ENCODE measurements at regions of chr4 and their contacts with region 1.

Region 1: DNA sequence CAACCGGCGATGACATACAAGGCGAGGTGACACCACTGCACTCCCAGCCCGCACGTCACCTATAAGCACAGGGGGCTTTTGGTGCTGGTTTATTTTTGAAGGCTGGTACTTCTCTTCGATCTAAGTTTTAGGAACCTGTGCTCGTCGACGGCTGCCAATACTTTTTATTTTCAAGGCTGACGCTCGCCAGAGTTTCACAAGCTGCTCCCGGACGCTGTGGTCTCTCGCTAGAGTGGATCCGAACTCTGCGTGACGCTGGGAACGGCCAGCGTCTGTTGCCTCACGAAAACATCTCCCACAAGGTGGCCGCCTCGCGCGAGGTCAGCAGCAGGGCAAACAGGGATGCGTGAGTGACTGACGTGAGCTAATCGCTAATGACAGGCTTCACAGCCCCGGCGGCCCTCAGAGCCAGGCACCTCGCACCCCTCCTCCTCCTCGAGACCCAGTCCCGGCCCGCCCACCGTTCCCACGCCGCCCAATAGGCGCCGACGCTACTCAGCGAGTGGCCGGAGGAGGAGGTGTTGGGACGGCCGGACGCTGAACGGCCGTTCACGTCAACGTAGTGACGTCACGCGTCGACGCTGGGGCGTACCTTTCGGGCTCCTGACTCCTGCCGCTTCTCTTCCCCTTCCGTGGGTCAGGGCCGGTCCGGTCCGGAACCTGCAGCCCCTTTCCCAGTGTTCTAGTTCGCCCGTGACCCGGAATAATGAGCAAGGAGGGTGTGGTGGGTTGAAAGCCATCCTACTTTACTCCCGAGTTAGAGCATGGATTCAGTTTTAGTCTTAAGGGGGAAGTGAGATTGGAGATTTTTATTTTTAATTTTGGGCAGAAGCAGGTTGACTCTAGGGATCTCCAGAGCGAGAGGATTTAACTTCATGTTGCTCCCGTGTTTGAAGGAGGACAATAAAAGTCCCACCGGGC is at the start of gene CLCN3:
- DNase-seq: peak; percentile 99 to 100
- ATAC-seq: peak; percentile 100
- H3K4me3 ChIP-seq: peak within 1 kb of the TSS; percentile 73 to 89
- H3K27ac ChIP-seq: peak within 1 kb of the TSS; percentile 14 to 79
- H3K4me1 ChIP-seq: peaks cover 0 to 2% of the 10 kb centered on the region in 2 donors
- H3K27me3 ChIP-seq: no peaks in the 10 kb centered on the region
- total RNA-seq, gene CLCN3: 19.1 to 29.1 TPM

Region 2: DNA sequence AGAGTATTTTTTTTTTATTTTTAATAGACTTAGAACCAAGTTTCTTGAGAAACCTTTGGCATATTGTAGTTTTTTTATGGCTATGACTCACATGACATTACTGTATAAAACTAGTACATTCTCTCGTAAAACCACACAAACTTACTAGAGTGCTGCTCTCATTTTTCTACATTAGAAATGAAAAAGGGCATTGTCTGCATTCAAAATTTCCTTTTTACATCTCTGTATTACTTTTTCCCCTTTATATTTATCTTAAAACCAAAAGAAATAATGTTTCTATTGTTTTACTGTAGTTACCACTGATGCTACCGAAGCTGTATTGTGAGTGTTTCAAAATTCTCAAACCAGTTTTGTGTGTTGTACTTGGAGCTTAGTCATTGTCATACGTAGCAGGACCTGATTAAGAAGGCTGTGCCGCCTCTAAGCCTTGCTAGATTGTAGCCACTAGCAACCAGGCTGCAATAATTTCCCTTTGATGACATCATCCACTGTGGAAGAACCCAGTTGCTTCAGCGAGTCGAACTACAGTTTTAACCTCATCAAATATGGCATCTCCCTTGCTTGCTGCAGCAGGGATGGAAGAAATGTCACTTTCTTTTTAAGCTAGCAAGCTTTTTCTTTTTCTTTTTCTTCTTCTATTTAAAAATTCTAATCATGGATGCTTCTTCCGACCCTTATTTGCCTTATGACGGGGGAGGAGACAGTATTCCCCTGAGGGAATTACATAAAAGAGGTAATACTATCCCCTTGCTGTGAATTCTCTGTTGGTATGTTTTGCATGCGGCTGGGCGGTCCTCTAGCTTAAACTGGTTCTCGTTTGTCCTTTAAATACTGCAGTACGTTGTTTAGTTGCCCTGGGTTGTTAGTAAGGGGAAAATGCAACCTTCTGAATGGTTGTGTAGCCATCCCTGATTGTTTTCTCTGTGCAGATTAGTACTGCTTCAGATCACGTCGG is 39.8 kb after region 1 on chr4:
- intact Hi-C with region 1: loop called in 1 of 2 experiments (anchors 5 kb)
- DNase-seq: peak in 1 of 2 donors; percentile 63
- ATAC-seq: peak; percentile 98
- H3K4me3 ChIP-seq: peak overlapping the region; percentile 76 to 81
- H3K27ac ChIP-seq: peak overlapping the region; percentile 40 to 57
- H3K4me1 ChIP-seq: no peaks in the 10 kb centered on the region
- H3K27me3 ChIP-seq: no peaks in the 10 kb centered on the region

Region 3: GRCh38 chr4:169707958-169708643 is 87.9 kb after region 1 on chr4:
- intact Hi-C with region 1: loop called in 1 of 2 experiments (anchors 5 kb)
- DNase-seq: no peak
- ATAC-seq: peak; percentile 48
- H3K4me3 ChIP-seq: no peak overlapping the region
- H3K27ac ChIP-seq: peak overlapping the region in 1 of 2 donors; percentile 71
- H3K4me1 ChIP-seq: no peaks in the 10 kb centered on the region
- H3K27me3 ChIP-seq: no peaks in the 10 kb centered on the region

Region 4: DNA sequence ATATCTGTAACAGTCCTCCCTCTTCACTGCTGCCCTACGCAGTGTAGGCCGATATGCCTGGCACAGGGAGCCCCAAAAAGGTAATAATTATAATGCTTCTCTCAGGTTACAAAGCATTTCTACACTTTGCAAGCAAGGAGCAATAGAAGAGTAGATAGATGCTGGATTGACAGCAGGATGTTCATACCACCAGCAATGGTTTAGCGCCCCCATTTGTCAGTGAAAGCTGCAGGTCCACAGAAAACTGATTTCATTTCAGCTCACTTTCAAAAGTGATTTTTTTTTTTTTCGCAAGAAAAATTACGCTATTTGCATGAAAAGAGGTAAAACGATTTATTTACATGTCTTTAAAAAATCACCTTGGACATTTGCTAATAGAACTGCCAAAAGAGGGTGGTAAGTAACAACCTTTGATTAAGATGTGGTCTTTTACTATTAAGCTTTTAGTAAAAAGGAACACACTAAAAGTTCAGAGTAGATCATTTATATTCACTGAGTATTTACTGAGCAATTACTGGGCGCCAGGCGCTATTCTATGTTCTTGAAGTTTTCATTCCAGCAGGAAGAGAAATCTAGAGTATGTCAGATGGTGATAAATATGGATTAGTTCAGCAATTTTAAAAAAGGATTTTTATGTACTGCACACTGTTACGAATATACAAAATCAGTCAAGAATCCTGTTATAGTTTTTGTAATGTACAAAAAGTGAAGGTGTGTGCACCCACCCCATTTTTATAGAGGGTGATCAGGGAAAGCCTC is 103.2 kb after region 1 on chr4:
- intact Hi-C with region 1: no loop called
- DNase-seq: no peak
- ATAC-seq: no peak
- H3K4me3 ChIP-seq: no peak overlapping the region
- H3K27ac ChIP-seq: no peak overlapping the region
- H3K4me1 ChIP-seq: no peaks in the 10 kb centered on the region
- H3K27me3 ChIP-seq: no peaks in the 10 kb centered on the region

Region 5: DNA sequence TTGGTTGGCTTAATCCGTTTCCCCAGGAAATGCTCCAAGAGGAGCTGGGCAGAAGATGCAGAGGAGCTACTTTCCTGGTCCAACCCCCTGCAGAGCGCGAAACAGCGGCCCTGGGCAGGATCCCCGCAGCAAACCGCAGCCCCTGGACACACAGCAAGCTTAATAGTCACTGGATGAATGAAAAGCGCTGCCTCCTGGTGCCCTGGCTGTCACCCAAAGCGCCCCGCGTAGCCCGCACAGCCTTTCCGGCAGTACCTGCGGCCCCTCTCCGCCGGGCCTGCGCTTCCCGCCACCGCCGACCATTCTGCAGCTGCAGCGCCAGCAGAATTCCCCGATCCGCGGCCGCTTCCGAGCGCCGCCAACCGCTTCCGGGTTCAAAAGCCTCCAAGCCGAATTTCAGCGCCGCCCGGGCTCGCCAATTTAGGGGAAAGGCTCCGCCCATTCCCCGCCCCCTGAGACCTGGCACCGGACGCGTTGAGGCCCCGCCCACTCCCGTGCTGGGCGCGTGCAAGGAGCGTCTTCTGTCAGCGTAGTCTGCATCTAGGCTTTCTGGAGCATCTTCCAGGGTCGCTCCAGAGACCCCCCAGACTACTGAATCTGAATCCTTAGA is 137.5 kb after region 1 on chr4 and contains the start of gene HPF1:
- intact Hi-C with region 1: loop called (anchors 10 kb)
- DNase-seq: peak; percentile 95 to 98
- ATAC-seq: peak; percentile 96
- H3K4me3 ChIP-seq: peak within 1 kb of the TSS; percentile 58 to 99
- H3K27ac ChIP-seq: peak within 1 kb of the TSS in 1 of 2 donors; percentile 14
- H3K4me1 ChIP-seq: peaks cover 6 to 8% of the 10 kb centered on the region in 2 donors
- H3K27me3 ChIP-seq: no peaks in the 10 kb centered on the region
- total RNA-seq, gene HPF1: 22.5 to 25.5 TPM

Region 6: GRCh38 chr4:169810325-169811323 is 190.4 kb after region 1 on chr4:
- intact Hi-C with region 1: no loop called
- DNase-seq: no peak
- ATAC-seq: no peak
- H3K4me3 ChIP-seq: peak overlapping the region in 1 of 2 donors; percentile 59
- H3K27ac ChIP-seq: no peak overlapping the region
- H3K4me1 ChIP-seq: no peaks in the 10 kb centered on the region
- H3K27me3 ChIP-seq: no peaks in the 10 kb centered on the region

Measured in aorta (tissue), 5 donors.